Activated naive CD4-positive, alpha-beta T cell treated with anti-CD3 and anti-CD28 coated beads for 36 hours (primary cell): ENCODE measurements at regions of chr4 and their contacts with region 1.

Region 1: GRCh38 chr4:176034499-176034898 is 31.1 kb upstream of the WDR17 start:
- DNase-seq: peak; percentile 28
- H3K4me3 Mint-ChIP-seq: no peak overlapping the region
- H3K27ac Mint-ChIP-seq: no peak overlapping the region
- H3K4me1 Mint-ChIP-seq: no peaks in the 10 kb centered on the region
- H3K27me3 Mint-ChIP-seq: no peaks in the 10 kb centered on the region

Region 2: GRCh38 chr4:176277162-176277904 is 242.8 kb after region 1 on chr4:
- CTCF ChIA-PET with region 1: no interaction called
- intact Hi-C with region 1: loop called (anchors 1 kb)
- DNase-seq: peak; percentile 32
- H3K4me3 Mint-ChIP-seq: no peak overlapping the region
- H3K27ac Mint-ChIP-seq: no peak overlapping the region
- H3K4me1 Mint-ChIP-seq: no peaks in the 10 kb centered on the region
- H3K27me3 Mint-ChIP-seq: peaks cover 15% of the 10 kb centered on the region

Region 3: GRCh38 chr4:176340871-176341685 is 306.6 kb after region 1 on chr4:
- CTCF ChIA-PET with region 1: interaction called, 12 read pairs
- intact Hi-C with region 1: loop called (anchors 1 kb)
- DNase-seq: no peak
- H3K4me3 Mint-ChIP-seq: no peak overlapping the region
- H3K27ac Mint-ChIP-seq: no peak overlapping the region
- H3K4me1 Mint-ChIP-seq: peaks cover 2% of the 10 kb centered on the region
- H3K27me3 Mint-ChIP-seq: no peaks in the 10 kb centered on the region